ENCODE measurements at regions of chr7 and their contacts with region 1.

Region 1: DNA sequence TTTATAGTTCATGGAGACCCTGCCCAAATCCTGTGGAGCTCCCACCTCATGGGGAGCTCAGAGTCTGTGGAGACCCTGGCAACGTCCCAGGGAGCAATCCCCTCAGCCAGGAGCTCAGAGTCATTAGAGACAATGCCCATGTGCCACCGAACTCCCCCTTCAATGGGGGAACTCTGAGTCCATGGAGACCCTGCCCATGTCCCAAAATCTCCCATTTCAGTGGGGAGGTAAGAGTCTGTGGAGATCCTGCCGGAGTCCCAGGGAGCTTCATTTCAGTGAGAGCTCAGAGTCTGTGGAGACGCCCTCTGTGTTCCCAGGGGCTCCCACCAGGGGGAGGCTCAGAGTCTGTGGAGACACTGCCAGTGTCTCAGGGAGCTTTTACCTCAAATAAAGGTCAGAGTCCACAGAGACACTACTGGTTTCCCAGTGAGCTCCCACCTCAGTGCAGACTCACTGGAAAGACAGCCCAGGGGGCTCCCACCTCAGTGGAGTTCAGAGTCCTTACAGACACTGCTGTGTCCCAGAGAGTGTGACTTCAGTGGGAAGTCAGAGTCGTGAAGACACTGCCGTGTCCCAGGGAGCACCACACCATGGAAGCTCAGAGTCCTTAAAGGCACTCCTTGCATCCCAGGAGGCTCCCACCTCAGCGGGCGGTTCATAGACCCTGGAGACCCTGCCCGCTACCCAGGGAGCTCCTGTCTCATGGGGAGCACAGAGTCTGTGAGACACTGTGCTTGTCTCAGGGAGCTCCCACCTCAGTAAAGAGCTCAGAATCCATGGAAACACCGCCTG is 5.0 kb downstream of the MYO1G start:
- DNase-seq: peak; percentile 61

Region 2: DNA sequence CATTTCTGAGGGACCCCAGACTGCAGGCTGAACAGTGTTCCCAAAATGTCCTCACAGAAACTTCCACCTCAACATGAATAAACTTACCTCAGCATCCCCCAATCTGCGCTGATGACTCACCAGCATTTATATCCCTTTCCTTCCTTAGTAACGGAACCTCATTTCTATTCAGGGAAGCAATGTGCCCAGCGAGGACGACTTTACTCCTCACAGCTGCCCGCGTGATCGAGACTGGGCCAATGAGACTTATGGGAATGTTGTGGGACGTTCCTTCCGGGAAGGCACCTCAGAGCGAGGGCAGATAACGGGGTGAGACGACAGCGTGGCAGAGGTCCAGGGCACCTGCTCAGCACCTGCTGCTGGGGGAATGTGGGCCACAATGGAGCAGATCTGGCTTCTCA is 575.3 kb before region 1 on chr7:
- CTCF ChIA-PET with region 1: no interaction called
- POLR2A ChIA-PET with region 1: no interaction called
- DNase-seq: no peak

Region 3: DNA sequence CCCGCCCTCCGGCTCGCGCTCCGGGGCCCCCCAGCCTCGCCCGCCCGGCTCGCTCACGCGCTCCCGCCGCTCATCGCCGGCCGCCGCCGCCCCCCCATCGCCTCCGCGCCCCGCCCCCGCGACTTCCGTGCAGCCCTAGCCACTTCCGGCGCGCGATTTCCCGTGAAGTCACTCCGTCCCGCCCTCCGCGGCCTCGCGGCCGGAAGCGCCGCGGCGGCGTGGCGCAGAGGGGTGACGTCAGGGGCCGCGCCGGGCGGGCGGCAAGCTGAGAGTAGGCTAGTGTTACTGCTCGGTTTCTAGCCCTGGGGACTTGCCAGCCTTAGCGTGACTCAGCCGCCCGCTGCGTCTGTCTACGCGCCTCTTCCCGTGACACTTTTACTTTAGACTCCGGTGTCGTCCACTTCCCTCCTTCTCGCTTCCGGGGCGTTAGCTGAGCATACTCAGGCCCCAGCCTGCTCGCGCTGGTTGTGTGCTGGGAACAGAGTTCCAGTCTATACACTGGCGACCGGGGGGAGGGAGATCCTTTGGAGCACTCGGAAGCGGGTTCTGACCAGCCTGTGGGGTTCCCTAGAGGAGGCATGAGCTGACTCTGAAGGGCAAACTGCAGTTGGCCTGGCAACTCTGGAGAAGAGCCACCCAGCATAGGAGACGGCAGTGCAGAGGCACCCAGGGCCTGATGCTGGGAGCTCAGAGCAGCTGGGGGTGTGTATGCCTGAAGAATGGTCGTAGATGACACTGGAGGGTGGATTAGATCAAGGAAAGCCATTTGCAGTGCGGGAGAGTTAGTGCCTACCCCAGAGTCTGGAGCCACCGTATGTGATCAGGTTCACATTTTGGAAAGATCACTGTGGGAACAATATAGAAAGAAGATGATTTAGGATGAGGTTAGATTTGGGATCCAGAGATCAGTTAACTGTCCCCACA is 88.2 kb before region 1 on chr7 and contains the start of gene PURB:
- CTCF ChIA-PET with region 1: interaction called, 4 read pairs
- POLR2A ChIA-PET with region 1: interaction called, 11 read pairs
- DNase-seq: peak; percentile 94

Region 4: GRCh38 chr7:44986218-44987053 is 12.6 kb after region 1 on chr7:
- CTCF ChIA-PET with region 1: interaction called, 18 read pairs
- POLR2A ChIA-PET with region 1: interaction called, 71 read pairs
- DNase-seq: peak; percentile 93

Region 5: DNA sequence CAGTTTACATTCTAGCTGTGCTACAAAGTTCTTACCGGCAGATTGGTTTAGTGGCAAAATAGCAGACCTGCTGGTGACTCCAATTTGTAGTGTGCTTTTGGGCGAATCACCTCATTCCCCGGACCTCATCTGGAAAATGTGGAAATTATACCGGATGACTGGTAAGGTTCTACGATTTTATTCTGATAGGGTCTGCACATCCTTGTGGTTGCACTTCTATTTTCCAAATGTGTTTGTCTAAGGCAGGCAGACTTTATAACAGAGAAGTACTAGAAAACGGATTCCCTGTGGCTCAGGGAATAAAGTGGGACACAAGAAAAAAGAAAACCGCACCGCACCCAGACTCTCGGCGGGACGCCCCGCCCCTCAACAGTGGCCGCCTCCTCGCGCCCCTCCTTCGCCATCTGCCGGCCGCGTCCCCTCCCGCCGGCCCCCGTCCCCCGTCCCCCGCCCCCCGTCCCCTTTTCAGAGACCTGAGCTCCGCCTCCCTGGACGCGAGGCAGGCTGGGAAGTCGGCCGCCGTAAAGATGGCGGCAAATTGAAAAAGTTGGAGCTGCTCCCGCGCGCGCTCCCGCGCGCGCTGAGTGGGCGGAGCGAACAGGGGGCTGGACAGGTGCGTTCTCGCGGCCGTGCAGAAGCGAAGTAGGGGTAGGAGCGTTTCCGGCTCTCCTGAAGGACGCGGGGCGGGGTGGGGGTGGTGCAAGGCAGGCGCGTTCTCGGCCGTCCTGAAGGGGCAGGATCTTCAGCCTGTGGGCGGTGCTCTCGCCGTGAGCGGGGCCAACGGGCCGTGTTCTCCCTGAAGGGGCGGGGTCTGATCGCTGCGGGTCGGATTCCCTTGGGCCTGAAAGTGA is 25.7 kb after region 1 on chr7:
- CTCF ChIA-PET with region 1: interaction called, 4 read pairs
- POLR2A ChIA-PET with region 1: interaction called, 10 read pairs
- DNase-seq: peak; percentile 96

Region 6: GRCh38 chr7:45136106-45137060 is 162.6 kb after region 1 on chr7:
- CTCF ChIA-PET with region 1: interaction called, 76 read pairs
- POLR2A ChIA-PET with region 1: interaction called, 6 read pairs
- DNase-seq: peak; percentile 79

Measured in HEK293T (cell line).